ENCODE measurements at regions of chr11 and their contacts with region 1.

Region 1: GRCh38 chr11:5967708-5968107 is 586 bp downstream of the OR56A5 start:
- DNase-seq: no peak
- H3K4me3 ChIP-seq: no peak overlapping the region
- H3K27ac ChIP-seq: no peak overlapping the region
- H3K4me1 ChIP-seq: no peaks in the 10 kb centered on the region
- H3K27me3 ChIP-seq: no peaks in the 10 kb centered on the region
- CTCF ChIP-seq: no peak
- POLR2A ChIP-seq: no peak

Region 2: DNA sequence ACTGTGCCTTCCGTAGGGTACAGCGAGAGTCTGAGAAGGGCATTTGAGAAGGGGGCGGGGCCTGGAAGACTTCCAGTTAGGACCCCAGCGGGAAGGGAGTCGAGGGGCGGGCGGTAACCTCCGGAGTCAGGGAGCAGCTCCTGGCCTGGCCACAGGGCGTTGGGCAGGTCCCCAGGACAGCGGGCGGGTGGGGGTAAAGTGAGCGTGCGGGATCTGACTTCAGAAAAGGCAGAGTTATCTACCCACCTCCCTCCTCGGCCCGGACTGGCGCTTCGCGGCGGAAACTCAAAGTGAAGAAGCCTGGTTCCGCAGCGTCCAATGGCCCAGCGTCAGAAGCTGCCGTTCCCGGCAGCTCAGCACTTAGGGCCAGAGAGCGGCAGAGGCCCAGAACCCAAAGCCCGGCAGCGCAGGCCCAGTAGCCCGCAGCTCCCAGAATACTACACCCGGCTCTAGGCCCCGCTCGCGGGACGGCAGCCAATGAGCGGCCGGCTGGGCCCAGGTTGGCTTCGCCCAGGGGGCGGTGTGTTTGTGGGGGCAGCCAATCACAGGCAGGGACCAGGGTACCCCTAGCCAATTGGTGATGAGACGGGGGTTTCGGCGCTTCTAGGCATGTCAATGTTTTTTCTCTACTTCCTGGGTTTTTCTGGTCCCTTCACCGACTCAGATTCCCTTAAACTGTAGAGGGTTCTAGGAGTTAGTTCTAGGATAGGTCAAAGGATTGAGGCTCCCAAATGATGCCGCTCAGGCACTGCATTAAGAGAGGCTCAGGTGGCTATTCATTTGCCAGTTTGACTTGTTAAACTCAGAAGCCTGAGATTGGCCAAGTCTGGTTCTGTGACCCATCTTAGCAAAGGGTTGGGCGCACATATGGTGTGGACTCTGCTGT is 1359.7 kb before region 1 on chr11 and contains the start of gene TRIM68:
- intact Hi-C with region 1: no loop called
- DNase-seq: peak; percentile 93
- H3K4me3 ChIP-seq: peak within 1 kb of the TSS; percentile 59 to 76 (median 69)
- H3K27ac ChIP-seq: peak within 1 kb of the TSS; percentile 88 to 89
- H3K4me1 ChIP-seq: no peaks in the 10 kb centered on the region
- H3K27me3 ChIP-seq: no peaks in the 10 kb centered on the region
- CTCF ChIP-seq: no peak
- POLR2A ChIP-seq: peak; percentile 59
- total RNA-seq, gene TRIM68: 12.6 to 30.0 (median 19.3) TPM

Region 3: DNA sequence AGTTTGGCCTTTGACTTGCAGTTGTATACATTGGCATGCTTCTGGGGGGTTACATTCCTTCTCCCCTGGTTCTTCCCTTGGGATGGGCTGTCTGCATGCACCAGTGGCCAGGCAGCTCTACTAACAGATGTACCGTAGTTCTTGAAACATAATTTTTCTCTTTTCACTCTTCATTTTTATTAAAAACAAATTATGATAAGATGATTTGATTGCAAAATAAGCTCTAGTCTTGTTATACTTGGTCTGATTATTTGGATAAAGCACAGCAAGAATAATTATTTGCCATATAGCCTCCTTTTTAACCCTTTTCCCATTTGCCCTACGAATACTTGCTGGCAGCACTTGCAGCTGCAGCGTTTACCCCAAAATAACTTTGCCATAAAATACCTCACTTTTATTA is 12.1 kb before region 1 on chr11:
- intact Hi-C with region 1: loop called (anchors 1 kb)
- DNase-seq: no peak
- H3K4me3 ChIP-seq: no peak overlapping the region
- H3K27ac ChIP-seq: no peak overlapping the region
- H3K4me1 ChIP-seq: no peaks in the 10 kb centered on the region
- H3K27me3 ChIP-seq: no peaks in the 10 kb centered on the region
- CTCF ChIP-seq: no peak
- POLR2A ChIP-seq: no peak

Region 4: GRCh38 chr11:6002202-6002699 is 34.5 kb after region 1 on chr11:
- intact Hi-C with region 1: no loop called
- DNase-seq: no peak
- H3K4me3 ChIP-seq: no peak overlapping the region
- H3K27ac ChIP-seq: no peak overlapping the region
- H3K4me1 ChIP-seq: no peaks in the 10 kb centered on the region
- H3K27me3 ChIP-seq: no peaks in the 10 kb centered on the region
- CTCF ChIP-seq: no peak
- POLR2A ChIP-seq: no peak

Measured in breast epithelium (tissue), 4 donors.